Naive thymus-derived CD4-positive, alpha-beta T cell (primary cell): ENCODE measurements at regions of chr7 and their contacts with region 1.

Region 1: GRCh38 chr7:93231799-93232672 is at the start of gene VPS50:
- DNase-seq: peak; percentile 74 to 97 (median 96)
- ATAC-seq: peak; percentile 98
- H3K4me3 ChIP-seq: peak within 1 kb of the TSS; percentile 93
- H3K4me3 Mint-ChIP-seq: peak within 1 kb of the TSS; percentile 91 to 99 (median 97)
- H3K27ac ChIP-seq: peak within 1 kb of the TSS; percentile 89
- H3K27ac Mint-ChIP-seq: peak within 1 kb of the TSS; percentile 93 to 99 (median 98)
- H3K4me1 ChIP-seq: peaks cover 6% of the 10 kb centered on the region in 2 donors
- H3K4me1 Mint-ChIP-seq: peaks cover 5 to 38% (median 21%) of the 10 kb centered on the region in 7 donors
- H3K27me3 ChIP-seq: no peaks in the 10 kb centered on the region
- H3K27me3 Mint-ChIP-seq: peaks cover 0 to 12% (median 0%) of the 10 kb centered on the region in 5 donors
- total RNA-seq, gene VPS50: 19.8 to 44.2 (median 36.8) TPM

Region 2: GRCh38 chr7:91880413-91881241 is 1351.4 kb before region 1 on chr7 and contains the start of gene MTERF1:
- CTCF ChIA-PET with region 1: no interaction called
- POLR2A ChIA-PET with region 1: interaction called, 3 read pairs
- intact Hi-C with region 1: loop called (anchors 1 to 5 kb)
- DNase-seq: peak; percentile 85 to 93 (median 91)
- ATAC-seq: peak; percentile 100
- H3K4me3 ChIP-seq: peak within 1 kb of the TSS; percentile 84
- H3K4me3 Mint-ChIP-seq: peak within 1 kb of the TSS; percentile 88 to 100 (median 98)
- H3K27ac ChIP-seq: peak within 1 kb of the TSS; percentile 72
- H3K27ac Mint-ChIP-seq: peak within 1 kb of the TSS; percentile 89 to 98 (median 96)
- H3K4me1 ChIP-seq: peaks cover 0 to 8% of the 10 kb centered on the region in 2 donors
- H3K4me1 Mint-ChIP-seq: peaks cover 31 to 53% (median 39%) of the 10 kb centered on the region in 7 donors
- H3K27me3 ChIP-seq: no peaks in the 10 kb centered on the region
- H3K27me3 Mint-ChIP-seq: peaks cover 0 to 9% (median 0%) of the 10 kb centered on the region in 5 donors
- total RNA-seq, gene MTERF1: 9.6 to 32.7 (median 17.8) TPM

Region 3: DNA sequence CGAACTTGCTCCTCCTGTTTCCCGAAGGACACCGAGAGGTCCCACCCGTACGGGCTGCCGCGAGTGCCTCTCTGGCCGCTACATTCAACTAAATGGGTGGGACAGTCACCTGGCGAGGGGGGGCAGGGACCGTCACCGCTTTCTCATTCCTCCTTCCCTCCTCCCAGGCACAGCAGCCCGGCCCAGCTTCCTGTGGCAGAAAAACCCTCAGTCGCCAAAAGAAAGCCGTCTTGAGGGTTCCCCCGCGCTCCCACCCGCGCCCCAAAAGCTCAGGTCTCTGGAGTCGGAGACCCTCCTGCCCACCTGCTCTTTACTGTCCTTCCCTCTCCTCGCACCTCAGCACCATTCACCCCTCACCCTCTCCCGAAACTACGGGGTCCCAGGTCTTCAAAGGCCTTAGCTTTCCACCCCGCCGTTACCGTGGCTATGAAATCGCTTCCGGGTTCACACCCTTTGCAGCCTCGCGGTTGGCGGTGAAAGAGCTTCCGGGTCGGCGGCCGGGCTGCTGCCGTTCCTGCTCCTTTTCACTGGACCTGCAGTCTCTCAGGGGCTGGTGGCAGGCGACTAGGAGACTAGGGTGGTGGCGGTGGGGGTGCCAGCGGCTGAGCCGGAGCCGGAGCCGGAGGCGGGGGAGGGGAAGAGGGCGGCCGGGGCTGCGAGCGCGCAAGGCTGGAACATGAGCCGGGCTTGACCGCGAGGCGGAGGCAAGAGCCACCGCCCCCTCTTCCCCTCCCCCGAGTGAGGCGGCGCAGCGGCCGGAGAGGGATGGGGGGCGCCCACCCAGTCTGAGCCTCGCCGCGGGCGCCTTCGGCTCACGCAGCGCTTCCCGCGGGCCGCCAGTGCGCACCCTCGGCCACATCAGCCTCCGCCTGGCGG is 986.3 kb before region 1 on chr7 and contains the starts of genes ANKIB1 and KRIT1:
- CTCF ChIA-PET with region 1: no interaction called
- POLR2A ChIA-PET with region 1: no interaction called
- intact Hi-C with region 1: loop called (anchors 1 to 2 kb)
- DNase-seq: peak; percentile 68 to 88 (median 86)
- ATAC-seq: peak; percentile 87
- H3K4me3 ChIP-seq: peak within 1 kb of the TSS; percentile 80
- H3K4me3 Mint-ChIP-seq: peak within 1 kb of the TSS; percentile 97 to 100 (median 98)
- H3K27ac ChIP-seq: peak within 1 kb of the TSS; percentile 92
- H3K27ac Mint-ChIP-seq: peak within 1 kb of the TSS; percentile 98 to 100 (median 100)
- H3K4me1 ChIP-seq: peaks cover 15 to 22% of the 10 kb centered on the region in 2 donors
- H3K4me1 Mint-ChIP-seq: peaks cover 30 to 64% (median 45%) of the 10 kb centered on the region in 7 donors
- H3K27me3 ChIP-seq: no peaks in the 10 kb centered on the region
- H3K27me3 Mint-ChIP-seq: no peaks in the 10 kb centered on the region
- total RNA-seq, gene ANKIB1: 54.8 to 98.6 (median 68.2) TPM
- total RNA-seq, gene KRIT1: 45.7 to 78.7 (median 48.6) TPM

Region 4: GRCh38 chr7:92621026-92621540 is 611.0 kb before region 1 on chr7:
- CTCF ChIA-PET with region 1: interaction called, 4 read pairs
- POLR2A ChIA-PET with region 1: no interaction called
- intact Hi-C with region 1: loop called (anchors 1 to 5 kb)
- DNase-seq: peak; percentile 39 to 84 (median 73)
- ATAC-seq: peak; percentile 96
- H3K4me3 ChIP-seq: no peak overlapping the region
- H3K4me3 Mint-ChIP-seq: peak overlapping the region in 9 of 10 donors; percentile 15 to 84 (median 54)
- H3K27ac ChIP-seq: peak overlapping the region; percentile 24
- H3K27ac Mint-ChIP-seq: peak overlapping the region; percentile 17 to 92 (median 84)
- H3K4me1 ChIP-seq: peaks cover 6 to 20% of the 10 kb centered on the region in 2 donors
- H3K4me1 Mint-ChIP-seq: peaks cover 8 to 58% (median 33%) of the 10 kb centered on the region in 7 donors
- H3K27me3 ChIP-seq: no peaks in the 10 kb centered on the region
- H3K27me3 Mint-ChIP-seq: no peaks in the 10 kb centered on the region

Region 5: GRCh38 chr7:93092757-93093370 is 139.2 kb before region 1 on chr7:
- CTCF ChIA-PET with region 1: no interaction called
- POLR2A ChIA-PET with region 1: no interaction called
- intact Hi-C with region 1: loop called (anchors 1 kb)
- DNase-seq: peak in 1 of 9 donors; percentile 2
- ATAC-seq: no peak
- H3K4me3 ChIP-seq: no peak overlapping the region
- H3K4me3 Mint-ChIP-seq: no peak overlapping the region
- H3K27ac ChIP-seq: no peak overlapping the region
- H3K27ac Mint-ChIP-seq: no peak overlapping the region
- H3K4me1 ChIP-seq: no peaks in the 10 kb centered on the region
- H3K4me1 Mint-ChIP-seq: no peaks in the 10 kb centered on the region
- H3K27me3 ChIP-seq: no peaks in the 10 kb centered on the region
- H3K27me3 Mint-ChIP-seq: peaks cover 10 to 37% (median 12%) of the 10 kb centered on the region in 5 donors

Region 6: DNA sequence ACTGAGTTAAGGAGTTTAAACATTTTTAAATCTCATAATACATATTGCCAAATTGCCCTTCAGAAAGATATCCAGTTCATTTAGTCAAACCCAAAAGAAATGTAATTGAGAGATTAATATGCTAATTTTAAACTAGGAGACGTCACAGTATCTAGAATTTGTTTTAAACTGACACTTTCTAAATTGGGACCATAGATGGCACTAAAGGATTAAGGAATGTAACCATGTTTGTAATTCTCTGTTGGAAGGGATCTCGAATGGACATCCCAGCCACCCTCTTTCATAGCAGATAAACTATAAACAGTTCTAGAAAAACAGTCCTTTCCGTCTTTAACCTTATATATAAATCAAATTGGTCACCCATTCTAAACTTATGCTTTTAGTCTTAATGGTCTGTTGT is 53.8 kb before region 1 on chr7:
- CTCF ChIA-PET with region 1: no interaction called
- POLR2A ChIA-PET with region 1: no interaction called
- intact Hi-C with region 1: loop called in 1 of 2 experiments (anchors 2 kb)
- DNase-seq: peak in 2 of 9 donors; percentile 1 to 7
- ATAC-seq: no peak
- H3K4me3 ChIP-seq: no peak overlapping the region
- H3K4me3 Mint-ChIP-seq: no peak overlapping the region
- H3K27ac ChIP-seq: no peak overlapping the region
- H3K27ac Mint-ChIP-seq: no peak overlapping the region
- H3K4me1 ChIP-seq: no peaks in the 10 kb centered on the region
- H3K4me1 Mint-ChIP-seq: no peaks in the 10 kb centered on the region
- H3K27me3 ChIP-seq: peaks cover 0 to 3% of the 10 kb centered on the region in 2 donors
- H3K27me3 Mint-ChIP-seq: peaks cover 0 to 52% (median 22%) of the 10 kb centered on the region in 5 donors

Region 7: GRCh38 chr7:93212881-93213280 is 19.2 kb before region 1 on chr7:
- CTCF ChIA-PET with region 1: no interaction called
- POLR2A ChIA-PET with region 1: no interaction called
- intact Hi-C with region 1: no loop called
- DNase-seq: no peak
- ATAC-seq: no peak
- H3K4me3 ChIP-seq: no peak overlapping the region
- H3K4me3 Mint-ChIP-seq: no peak overlapping the region
- H3K27ac ChIP-seq: no peak overlapping the region
- H3K27ac Mint-ChIP-seq: no peak overlapping the region
- H3K4me1 ChIP-seq: no peaks in the 10 kb centered on the region
- H3K4me1 Mint-ChIP-seq: peaks cover 0 to 2% (median 0%) of the 10 kb centered on the region in 7 donors
- H3K27me3 ChIP-seq: peaks cover 0 to 6% of the 10 kb centered on the region in 2 donors
- H3K27me3 Mint-ChIP-seq: peaks cover 30 to 65% (median 47%) of the 10 kb centered on the region in 5 donors

Region 8: GRCh38 chr7:94395141-94396036 is 1163.4 kb after region 1 on chr7:
- CTCF ChIA-PET with region 1: no interaction called
- POLR2A ChIA-PET with region 1: no interaction called
- intact Hi-C with region 1: loop called in 1 of 2 experiments (anchors 5 kb)
- DNase-seq: peak in 3 of 9 donors; percentile 28 to 57 (median 29)
- ATAC-seq: peak; percentile 63
- H3K4me3 ChIP-seq: no peak overlapping the region
- H3K4me3 Mint-ChIP-seq: peak overlapping the region; percentile 17 to 95 (median 70)
- H3K27ac ChIP-seq: no peak overlapping the region
- H3K27ac Mint-ChIP-seq: peak overlapping the region in 3 of 9 donors; percentile 42 to 91 (median 68)
- H3K4me1 ChIP-seq: no peaks in the 10 kb centered on the region
- H3K4me1 Mint-ChIP-seq: peaks cover 6 to 39% (median 13%) of the 10 kb centered on the region in 7 donors
- H3K27me3 ChIP-seq: peaks cover 0 to 9% of the 10 kb centered on the region in 2 donors
- H3K27me3 Mint-ChIP-seq: peaks cover 0 to 70% (median 53%) of the 10 kb centered on the region in 5 donors